Tibial artery (tissue), 4 donors: ENCODE measurements at regions of chr17 and their contacts with region 1.

Region 1: GRCh38 chr17:38351412-38352222 is at the start of gene SOCS7:
- DNase-seq: peak; percentile 89 to 94
- H3K4me3 ChIP-seq: peak within 1 kb of the TSS; percentile 71 to 92
- H3K27ac ChIP-seq: peak within 1 kb of the TSS; percentile 84 to 90
- H3K4me1 ChIP-seq: peaks cover 0 to 42% (median 29%) of the 10 kb centered on the region in 4 donors
- H3K27me3 ChIP-seq: no peaks in the 10 kb centered on the region
- CTCF ChIP-seq: no peak

Region 2: DNA sequence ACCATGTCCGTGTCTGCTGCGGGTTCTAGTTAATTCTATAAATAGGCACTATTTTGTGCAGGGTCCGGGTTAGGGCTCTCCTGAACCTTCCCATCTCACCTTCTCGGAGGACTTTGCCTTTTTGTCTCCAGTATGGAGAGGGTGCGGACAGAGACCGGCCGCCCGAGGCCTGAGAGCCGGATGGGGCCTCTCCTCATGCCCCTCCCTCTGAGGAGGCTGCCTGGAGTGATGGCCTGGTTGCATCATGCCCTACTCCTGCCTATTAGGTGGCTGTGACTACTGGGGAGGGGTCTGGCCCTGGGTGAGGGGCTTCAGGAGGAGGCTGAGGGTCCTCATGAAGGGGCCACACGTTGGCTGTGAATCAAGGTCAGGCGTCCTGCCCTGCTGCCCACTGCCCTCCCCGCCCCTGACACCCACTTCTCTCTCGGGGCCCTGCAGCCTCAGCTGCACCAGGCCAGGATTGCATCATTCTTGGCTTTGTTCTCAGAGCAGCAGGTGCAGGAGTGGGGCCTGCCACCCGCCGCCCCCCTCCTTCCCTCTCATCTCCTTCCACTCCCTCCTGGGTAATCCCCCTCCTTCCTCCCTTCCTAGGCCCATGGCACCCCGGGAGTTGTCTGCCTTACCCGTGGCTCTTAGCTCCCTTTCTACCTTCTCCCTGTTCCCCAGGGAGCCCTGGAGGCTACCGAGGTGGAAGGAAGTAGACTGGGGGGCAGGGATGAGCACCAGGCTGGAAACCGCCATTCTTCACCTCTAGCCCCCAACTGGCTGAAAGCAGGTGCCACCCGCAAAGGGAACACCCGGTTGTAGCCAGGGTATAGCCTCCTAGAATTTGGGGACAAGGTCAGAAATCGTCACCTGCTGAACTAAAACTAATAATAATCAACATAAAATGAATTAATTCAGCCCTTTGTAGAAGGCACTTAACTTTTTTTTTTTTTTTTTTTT is 63.9 kb after region 1 on chr17:
- intact Hi-C with region 1: loop called (anchors 2 kb)
- DNase-seq: no peak
- H3K4me3 ChIP-seq: no peak overlapping the region
- H3K27ac ChIP-seq: no peak overlapping the region
- H3K4me1 ChIP-seq: peaks cover 0 to 32% (median 25%) of the 10 kb centered on the region in 4 donors
- H3K27me3 ChIP-seq: peaks cover 0 to 10% of the 10 kb centered on the region in 2 donors
- CTCF ChIP-seq: no peak

Region 3: GRCh38 chr17:38464723-38465390 is 113.2 kb after region 1 on chr17:
- intact Hi-C with region 1: no loop called
- DNase-seq: peak; percentile 90 to 97
- H3K4me3 ChIP-seq: peak overlapping the region; percentile 48 to 54
- H3K27ac ChIP-seq: peak overlapping the region; percentile 93
- H3K4me1 ChIP-seq: peaks cover 0 to 74% (median 64%) of the 10 kb centered on the region in 4 donors
- H3K27me3 ChIP-seq: no peaks in the 10 kb centered on the region
- CTCF ChIP-seq: no peak

Region 4: DNA sequence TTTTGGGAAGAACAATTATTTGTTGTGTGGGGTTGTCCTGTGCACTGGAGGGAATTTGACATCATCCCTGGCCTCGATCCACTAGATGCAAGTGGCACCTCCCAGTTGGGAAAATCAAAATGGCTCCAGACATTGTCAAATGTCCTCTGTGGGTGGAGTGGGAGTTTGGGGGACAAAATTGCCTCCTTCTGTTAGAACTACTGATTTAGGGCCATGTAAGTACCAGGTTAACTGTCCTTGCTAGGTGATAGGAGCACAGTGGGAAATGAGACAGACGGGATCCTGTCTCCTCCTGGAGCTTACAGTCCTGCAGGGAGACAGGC is 133.5 kb after region 1 on chr17:
- intact Hi-C with region 1: loop called (anchors 10 kb)
- DNase-seq: no peak
- H3K4me3 ChIP-seq: no peak overlapping the region
- H3K27ac ChIP-seq: peak overlapping the region; percentile 69 to 85
- H3K4me1 ChIP-seq: peaks cover 0 to 46% (median 25%) of the 10 kb centered on the region in 4 donors
- H3K27me3 ChIP-seq: no peaks in the 10 kb centered on the region
- CTCF ChIP-seq: no peak

Region 5: GRCh38 chr17:38591759-38592241 is 240.2 kb after region 1 on chr17:
- intact Hi-C with region 1: no loop called
- DNase-seq: no peak
- H3K4me3 ChIP-seq: no peak overlapping the region
- H3K27ac ChIP-seq: no peak overlapping the region
- H3K4me1 ChIP-seq: peaks cover 0 to 9% (median 0%) of the 10 kb centered on the region in 4 donors
- H3K27me3 ChIP-seq: peaks cover 0 to 88% of the 10 kb centered on the region in 2 donors
- CTCF ChIP-seq: no peak

Region 6: GRCh38 chr17:38654411-38655398 is 303.1 kb after region 1 on chr17:
- intact Hi-C with region 1: no loop called
- DNase-seq: peak in 1 of 2 donors; percentile 33
- H3K4me3 ChIP-seq: no peak overlapping the region
- H3K27ac ChIP-seq: no peak overlapping the region
- H3K4me1 ChIP-seq: peaks cover 0 to 8% (median 2%) of the 10 kb centered on the region in 4 donors
- H3K27me3 ChIP-seq: peaks cover 0 to 63% of the 10 kb centered on the region in 2 donors
- CTCF ChIP-seq: no peak

Region 7: DNA sequence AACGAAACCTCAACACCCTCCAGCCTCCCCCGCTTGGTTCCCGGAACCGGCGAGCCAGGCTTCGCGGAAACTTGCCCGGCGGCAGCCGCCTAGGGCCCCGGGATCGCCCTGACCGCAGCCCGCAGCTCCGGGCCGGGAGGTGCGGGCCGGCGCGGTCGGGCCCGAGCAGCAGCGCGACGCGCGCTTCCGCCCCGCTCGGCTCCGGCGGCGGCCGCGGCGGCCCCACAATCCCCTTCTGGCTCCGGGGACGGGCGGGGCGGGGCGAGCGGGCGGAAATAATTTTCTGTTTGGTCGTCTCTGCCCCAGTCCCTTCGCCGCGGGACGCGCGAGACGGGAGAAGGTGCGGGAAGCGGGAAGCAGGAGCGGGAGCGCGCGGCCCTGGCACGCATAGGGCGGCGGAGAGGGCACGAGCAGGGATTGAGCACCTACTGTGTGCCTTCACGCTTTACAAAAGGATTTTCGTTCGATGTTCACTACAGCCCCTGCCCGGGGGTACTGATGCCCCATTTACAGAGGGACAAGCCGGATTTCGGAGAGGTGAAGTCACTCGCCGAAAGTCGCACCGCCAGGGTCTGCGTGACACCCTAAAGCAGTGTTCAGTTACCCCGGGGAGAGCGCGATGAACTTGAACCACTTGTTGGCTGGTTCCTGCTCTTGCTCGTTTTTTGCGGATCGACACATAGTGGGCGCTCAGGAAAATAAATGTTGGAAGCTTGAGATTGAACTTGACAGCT is 350.7 kb after region 1 on chr17:
- intact Hi-C with region 1: no loop called
- DNase-seq: peak; percentile 87 to 94
- H3K4me3 ChIP-seq: peak overlapping the region; percentile 96 to 97
- H3K27ac ChIP-seq: peak overlapping the region; percentile 94 to 96
- H3K4me1 ChIP-seq: peaks cover 3 to 36% (median 24%) of the 10 kb centered on the region in 4 donors
- H3K27me3 ChIP-seq: no peaks in the 10 kb centered on the region
- CTCF ChIP-seq: no peak

Region 8: GRCh38 chr17:38729886-38730525 is 378.4 kb after region 1 on chr17 and contains the start of gene CISD3:
- intact Hi-C with region 1: loop called (anchors 10 kb)
- DNase-seq: peak; percentile 76 to 91
- H3K4me3 ChIP-seq: peak within 1 kb of the TSS; percentile 68 to 79
- H3K27ac ChIP-seq: peak within 1 kb of the TSS; percentile 86 to 94
- H3K4me1 ChIP-seq: peaks cover 0 to 45% (median 37%) of the 10 kb centered on the region in 4 donors
- H3K27me3 ChIP-seq: no peaks in the 10 kb centered on the region
- CTCF ChIP-seq: peak; percentile 60 to 96